Sciatic nerve (tissue), 2 donors: ENCODE measurements at regions of chr7 and their contacts with region 1.

Region 1: GRCh38 chr7:146683439-146683838 is 566.8 kb downstream of the CNTNAP2 start:
- DNase-seq: no peak
- ATAC-seq: no peak

Region 2: GRCh38 chr7:147106746-147107145 is 423.3 kb after region 1 on chr7:
- intact Hi-C with region 1: no loop called
- DNase-seq: no peak
- ATAC-seq: no peak

Region 3: DNA sequence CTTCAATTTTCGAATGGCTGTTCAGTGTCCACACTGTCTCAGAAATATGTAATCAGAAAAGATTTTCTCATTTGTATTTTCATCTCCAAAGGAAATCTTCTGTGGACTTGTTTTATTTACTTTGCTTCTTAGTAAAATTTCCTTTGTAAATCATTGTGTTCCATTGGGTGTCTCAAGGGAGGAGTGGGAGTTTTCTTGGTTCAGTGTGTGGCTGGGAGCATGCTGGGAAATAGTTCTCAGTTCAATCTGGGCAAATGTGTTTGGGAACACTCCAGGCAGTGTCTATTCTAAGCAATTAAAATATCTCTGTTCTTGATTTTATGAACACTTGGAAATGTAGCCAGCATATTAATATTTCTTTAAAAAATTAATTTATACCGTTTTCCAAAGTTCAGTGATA is 452.9 kb after region 1 on chr7:
- intact Hi-C with region 1: loop called (anchors 5 kb)
- DNase-seq: no peak
- ATAC-seq: peak; percentile 95

Region 4: GRCh38 chr7:147182874-147183273 is 499.4 kb after region 1 on chr7:
- intact Hi-C with region 1: no loop called
- DNase-seq: no peak
- ATAC-seq: no peak